SK-N-SH (cell line): ENCODE measurements at regions of chr3 and their contacts with region 1.

Region 1: GRCh38 chr3:158727206-158728060 is 4.8 kb downstream of the RARRES1 start:
- DNase-seq: peak; percentile 75
- H3K4me3 ChIP-seq: no peak overlapping the region; a peak in 1 of 4 replicates
- H3K27ac ChIP-seq: no peak overlapping the region
- H3K4me1 ChIP-seq: peaks cover 17 to 20% of the 10 kb centered on the region in 2 experiments; a peak in 3 of 4 replicates
- H3K27me3 ChIP-seq: no peaks in the 10 kb centered on the region
- CTCF ChIP-seq: peak; percentile 88
- EP300 ChIP-seq: no peak
- RAD21 ChIP-seq: peak; percentile 79

Region 2: DNA sequence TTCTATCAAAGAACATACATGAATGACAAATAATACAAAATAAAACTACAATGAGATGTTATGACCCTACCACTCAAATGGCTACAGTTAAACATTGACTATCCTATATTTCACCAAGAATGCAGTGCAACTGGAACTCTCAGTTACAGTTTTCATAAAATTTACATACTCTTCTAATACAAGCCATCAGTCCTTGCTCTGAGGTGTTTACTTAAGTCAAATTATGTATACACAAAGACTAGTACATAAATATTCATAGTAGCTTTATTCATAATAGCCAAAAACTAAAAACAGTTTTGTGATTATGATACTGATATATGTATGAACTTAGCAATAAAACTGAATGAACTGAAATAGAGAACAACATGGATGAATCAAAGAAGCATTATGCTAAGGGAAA is 137.2 kb before region 1 on chr3:
- CTCF ChIA-PET with region 1: no interaction called
- POLR2A ChIA-PET with region 1: no interaction called
- DNase-seq: no peak
- H3K4me3 ChIP-seq: no peak overlapping the region
- H3K27ac ChIP-seq: no peak overlapping the region
- H3K4me1 ChIP-seq: no peaks in the 10 kb centered on the region
- H3K27me3 ChIP-seq: no peaks in the 10 kb centered on the region
- CTCF ChIP-seq: no peak
- EP300 ChIP-seq: no peak
- RAD21 ChIP-seq: no peak

Region 3: GRCh38 chr3:158713094-158713499 is 14.3 kb before region 1 on chr3:
- CTCF ChIA-PET with region 1: interaction called, 16 read pairs
- POLR2A ChIA-PET with region 1: no interaction called
- DNase-seq: no peak
- H3K4me3 ChIP-seq: no peak overlapping the region
- H3K27ac ChIP-seq: peak overlapping the region in 1 of 2 experiments; percentile 42; a peak in 1 of 4 replicates
- H3K4me1 ChIP-seq: peaks cover 5 to 28% of the 10 kb centered on the region in 2 experiments
- H3K27me3 ChIP-seq: no peaks in the 10 kb centered on the region
- CTCF ChIP-seq: no peak
- EP300 ChIP-seq: no peak
- RAD21 ChIP-seq: no peak

Region 4: GRCh38 chr3:158768361-158768787 is 40.9 kb after region 1 on chr3:
- CTCF ChIA-PET with region 1: interaction called, 29 read pairs
- POLR2A ChIA-PET with region 1: no interaction called
- DNase-seq: no peak
- H3K4me3 ChIP-seq: no peak overlapping the region
- H3K27ac ChIP-seq: peak overlapping the region in 1 of 2 experiments; percentile 75; a peak in 2 of 4 replicates
- H3K4me1 ChIP-seq: peaks cover 4 to 29% of the 10 kb centered on the region in 2 experiments; a peak in 3 of 4 replicates
- H3K27me3 ChIP-seq: no peaks in the 10 kb centered on the region
- CTCF ChIP-seq: no peak
- EP300 ChIP-seq: no peak
- RAD21 ChIP-seq: no peak

Region 5: DNA sequence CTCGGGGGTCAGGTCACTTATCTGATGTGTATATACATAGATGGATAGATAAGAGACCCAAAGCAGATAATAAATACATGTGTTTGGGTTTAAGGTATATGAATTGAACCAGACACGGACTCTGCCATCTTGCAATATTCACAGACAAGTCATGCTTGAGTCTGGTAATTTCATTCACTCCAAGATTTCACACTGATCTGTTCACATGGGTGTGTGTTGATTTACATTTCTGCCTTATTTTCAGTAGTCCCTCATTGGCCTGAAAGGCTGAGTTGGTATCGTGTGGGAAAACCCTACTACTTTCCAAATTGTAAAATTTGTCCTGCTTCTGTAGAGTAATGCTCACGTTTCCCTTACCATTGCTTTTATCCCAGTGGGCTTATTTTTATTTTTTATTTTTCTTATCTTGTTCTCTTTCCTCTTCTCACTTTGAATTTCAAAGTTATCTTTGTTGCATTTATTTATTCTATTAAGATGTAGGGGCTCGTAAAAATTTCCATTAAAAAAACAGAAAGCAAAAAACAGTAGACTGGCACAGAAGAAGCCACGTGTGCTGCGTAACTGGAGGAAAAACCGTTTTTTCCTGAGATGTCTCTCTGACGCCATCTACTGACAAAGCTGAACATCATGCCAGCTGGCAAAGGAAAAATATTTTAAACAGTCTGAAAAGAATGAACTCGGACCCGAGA is 63.6 kb after region 1 on chr3:
- CTCF ChIA-PET with region 1: interaction called, 146 read pairs
- POLR2A ChIA-PET with region 1: interaction called, 3 read pairs
- DNase-seq: peak; percentile 45
- H3K4me3 ChIP-seq: peak overlapping the region in 1 of 2 experiments; percentile 33; a peak in 1 of 4 replicates
- H3K27ac ChIP-seq: no peak overlapping the region
- H3K4me1 ChIP-seq: peaks cover 0 to 17% of the 10 kb centered on the region in 2 experiments; a peak in 3 of 4 replicates
- H3K27me3 ChIP-seq: no peaks in the 10 kb centered on the region
- CTCF ChIP-seq: peak; percentile 92
- EP300 ChIP-seq: no peak
- RAD21 ChIP-seq: peak; percentile 90

Region 6: GRCh38 chr3:158961911-158962310 is 234.5 kb after region 1 on chr3:
- CTCF ChIA-PET with region 1: no interaction called
- POLR2A ChIA-PET with region 1: no interaction called
- DNase-seq: no peak
- H3K4me3 ChIP-seq: no peak overlapping the region
- H3K27ac ChIP-seq: no peak overlapping the region
- H3K4me1 ChIP-seq: no peaks in the 10 kb centered on the region
- H3K27me3 ChIP-seq: no peaks in the 10 kb centered on the region
- CTCF ChIP-seq: no peak
- EP300 ChIP-seq: no peak
- RAD21 ChIP-seq: no peak